ENCODE measurements at regions of chr19 and their contacts with region 1.

Region 1: DNA sequence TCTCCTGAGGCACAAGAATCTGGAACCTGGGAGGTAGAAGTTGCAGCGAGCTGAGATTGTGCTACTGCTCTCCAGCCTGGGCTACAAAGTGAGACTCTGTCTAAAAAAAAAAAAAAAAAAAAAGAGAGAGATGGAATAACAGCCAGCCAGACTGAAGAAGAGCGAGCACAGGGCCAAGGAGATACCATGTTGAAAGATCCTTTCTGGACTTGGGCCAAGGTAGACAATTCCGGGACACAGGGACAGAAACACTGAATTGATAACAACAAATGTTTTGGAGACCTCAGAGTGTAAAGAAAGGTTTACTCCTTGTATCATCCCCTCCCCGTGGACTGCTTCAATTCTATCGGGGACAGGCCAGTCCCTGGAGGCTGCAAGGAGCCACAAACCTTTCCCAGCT is 4.6 kb downstream of the LPAR2 start:
- DNase-seq: no peak
- H3K4me3 ChIP-seq: no peak overlapping the region
- H3K27ac ChIP-seq: no peak overlapping the region
- H3K27me3 ChIP-seq: no peaks in the 10 kb centered on the region
- CTCF ChIP-seq: no peak

Region 2: GRCh38 chr19:19602136-19602712 is 21.2 kb before region 1 on chr19:
- CTCF ChIA-PET with region 1: interaction called, 18 read pairs
- POLR2A ChIA-PET with region 1: no interaction called
- DNase-seq: no peak
- H3K4me3 ChIP-seq: no peak overlapping the region
- H3K27ac ChIP-seq: no peak overlapping the region
- H3K27me3 ChIP-seq: no peaks in the 10 kb centered on the region
- CTCF ChIP-seq: no peak

Region 3: GRCh38 chr19:19652456-19653295 is 29.3 kb after region 1 on chr19:
- CTCF ChIA-PET with region 1: no interaction called
- POLR2A ChIA-PET with region 1: no interaction called
- DNase-seq: no peak
- H3K4me3 ChIP-seq: no peak overlapping the region
- H3K27ac ChIP-seq: no peak overlapping the region
- H3K27me3 ChIP-seq: no peaks in the 10 kb centered on the region
- CTCF ChIP-seq: no peak

Measured in AG04450 (cell line).